ENCODE measurements at regions of chr7 and their contacts with region 1.

Region 1: GRCh38 chr7:134632937-134633540 is 13.6 kb upstream of the BPGM start:
- DNase-seq: peak; percentile 52
- H3K4me3 Mint-ChIP-seq: no peak overlapping the region
- H3K27ac Mint-ChIP-seq: no peak overlapping the region
- H3K4me1 Mint-ChIP-seq: peaks cover 27% of the 10 kb centered on the region
- H3K27me3 Mint-ChIP-seq: peaks cover 5% of the 10 kb centered on the region

Region 2: DNA sequence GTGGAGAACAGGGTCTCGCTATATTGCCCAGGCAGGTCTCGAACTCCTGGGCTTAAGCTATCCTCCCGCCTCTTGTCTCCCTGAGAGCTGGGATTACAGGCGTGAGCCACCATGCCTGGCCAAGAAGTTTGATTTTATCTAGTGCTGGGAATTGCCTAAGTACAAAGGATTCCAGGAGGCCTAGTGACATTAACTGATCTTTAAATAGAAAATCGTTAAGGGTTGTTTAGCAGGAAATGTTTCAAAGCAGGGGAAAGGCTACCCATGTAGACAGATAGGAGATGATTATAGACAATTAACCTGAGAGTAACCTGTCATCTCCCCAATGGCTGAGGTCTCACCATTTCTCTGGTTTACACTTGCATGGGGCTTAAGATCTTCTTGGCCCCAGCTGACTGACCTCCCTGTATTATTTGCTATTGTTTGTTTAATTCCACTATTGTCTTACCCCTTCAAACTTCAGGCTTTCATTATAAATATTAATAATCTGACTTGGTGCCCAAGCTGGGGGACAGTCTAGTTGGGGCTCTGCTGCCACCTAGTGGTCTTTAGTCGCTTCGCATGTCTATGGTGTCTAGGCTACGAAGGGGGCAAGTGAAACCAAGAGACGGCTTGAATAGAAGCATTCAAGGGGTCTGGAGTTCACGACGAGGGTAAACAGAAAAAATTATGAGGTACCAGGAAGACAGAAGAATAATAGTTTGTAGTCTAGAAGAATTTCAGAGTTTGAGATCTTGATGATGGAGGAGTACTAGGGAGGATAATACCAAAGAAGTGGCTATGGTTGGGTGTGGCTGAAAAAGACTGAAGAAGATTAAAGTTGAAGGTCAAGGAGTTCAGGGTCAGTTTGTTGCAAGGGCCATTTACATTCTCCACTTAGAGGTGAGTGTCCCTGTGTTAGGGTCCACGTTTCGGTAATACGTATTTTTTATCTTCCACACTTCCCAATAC is 26.8 kb before region 1 on chr7:
- CTCF ChIA-PET with region 1: interaction called, 16 read pairs
- intact Hi-C with region 1: no loop called
- DNase-seq: peak; percentile 76
- H3K4me3 Mint-ChIP-seq: no peak overlapping the region
- H3K27ac Mint-ChIP-seq: no peak overlapping the region
- H3K4me1 Mint-ChIP-seq: peaks cover 1% of the 10 kb centered on the region
- H3K27me3 Mint-ChIP-seq: peaks cover 3% of the 10 kb centered on the region

Region 3: DNA sequence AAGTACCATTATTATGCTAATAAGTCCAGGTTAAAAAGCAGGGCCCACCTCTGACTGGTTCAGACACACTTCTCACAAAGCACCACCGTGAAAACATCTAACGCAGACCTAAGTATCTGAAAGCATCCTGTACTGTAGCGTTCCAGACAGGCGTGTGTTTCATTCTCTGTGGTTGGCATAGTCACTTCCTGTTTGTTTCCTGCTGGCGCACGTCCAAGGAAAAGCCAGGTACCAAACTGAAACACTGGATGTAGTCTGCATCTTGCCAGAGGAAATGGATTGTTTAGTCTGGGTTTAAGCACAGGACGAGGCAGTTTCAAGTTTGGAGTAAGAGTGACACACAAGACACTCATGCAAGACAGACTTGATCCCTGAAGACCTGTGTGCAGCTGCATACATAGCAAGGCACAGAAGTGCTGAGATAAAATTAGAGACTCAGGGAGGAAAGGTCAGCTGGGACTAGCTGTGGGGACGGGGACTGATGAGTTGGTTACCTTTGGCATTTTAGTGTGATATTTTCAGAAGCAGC is 36.9 kb after region 1 on chr7:
- CTCF ChIA-PET with region 1: interaction called, 11 read pairs
- intact Hi-C with region 1: loop called (anchors 1 kb)
- DNase-seq: peak; percentile 88
- H3K4me3 Mint-ChIP-seq: peak overlapping the region; percentile 65
- H3K27ac Mint-ChIP-seq: peak overlapping the region; percentile 85
- H3K4me1 Mint-ChIP-seq: peaks cover 52% of the 10 kb centered on the region
- H3K27me3 Mint-ChIP-seq: no peaks in the 10 kb centered on the region

Region 4: GRCh38 chr7:134701272-134701671 is 68.2 kb after region 1 on chr7:
- CTCF ChIA-PET with region 1: interaction called, 88 read pairs
- intact Hi-C with region 1: loop called (anchors 1 kb)
- DNase-seq: no peak
- H3K4me3 Mint-ChIP-seq: no peak overlapping the region
- H3K27ac Mint-ChIP-seq: no peak overlapping the region
- H3K4me1 Mint-ChIP-seq: no peaks in the 10 kb centered on the region
- H3K27me3 Mint-ChIP-seq: no peaks in the 10 kb centered on the region

Region 5: DNA sequence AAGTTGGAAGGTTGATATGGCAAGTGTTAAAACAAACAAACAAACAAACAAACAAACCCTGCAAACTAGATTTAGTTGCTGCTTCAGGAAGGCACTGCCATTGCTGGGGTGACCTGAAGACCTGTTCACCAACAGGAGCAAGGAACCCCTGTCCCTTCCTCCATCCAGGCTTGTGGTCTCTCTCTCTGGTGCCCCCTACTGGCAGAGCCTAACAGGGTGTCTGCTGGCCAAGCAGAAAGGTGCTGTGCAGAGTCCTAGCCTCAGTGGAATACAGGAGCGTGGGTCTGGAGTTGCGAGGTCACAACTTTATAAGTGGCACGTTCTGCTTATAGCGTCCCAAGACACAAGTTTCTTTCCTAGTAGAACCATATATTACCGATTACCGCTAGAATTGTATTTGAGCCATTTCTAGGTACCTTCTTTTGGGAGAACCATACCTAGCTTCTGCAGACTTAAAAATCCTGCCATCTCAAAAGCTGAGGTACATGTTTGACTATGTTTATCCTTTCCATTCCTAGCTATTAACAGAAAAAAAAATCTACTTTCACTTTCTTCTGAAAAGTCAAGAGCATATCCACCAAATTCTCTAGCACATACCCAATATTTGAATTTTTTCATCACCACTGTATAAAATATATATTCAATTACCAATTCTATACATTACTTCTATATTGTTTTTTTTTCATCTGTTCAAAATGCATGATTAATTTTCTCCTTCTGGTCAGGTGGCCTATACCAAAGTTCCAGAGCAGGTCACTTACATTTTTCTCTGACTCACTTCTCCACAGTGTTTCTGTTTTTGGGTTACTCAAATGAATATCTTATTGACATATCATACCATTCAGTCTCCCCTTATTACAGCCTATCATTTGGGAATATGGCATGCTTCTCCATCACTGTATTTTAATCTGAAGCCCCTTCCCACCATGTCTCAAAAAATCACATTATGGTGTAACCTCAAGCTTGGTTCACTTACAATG is 117.3 kb after region 1 on chr7:
- CTCF ChIA-PET with region 1: interaction called, 49 read pairs
- intact Hi-C with region 1: loop called (anchors 1 kb)
- DNase-seq: peak; percentile 86
- H3K4me3 Mint-ChIP-seq: no peak overlapping the region
- H3K27ac Mint-ChIP-seq: no peak overlapping the region
- H3K4me1 Mint-ChIP-seq: peaks cover 3% of the 10 kb centered on the region
- H3K27me3 Mint-ChIP-seq: no peaks in the 10 kb centered on the region

Region 6: GRCh38 chr7:134845468-134845867 is 212.4 kb after region 1 on chr7:
- CTCF ChIA-PET with region 1: interaction called, 3 read pairs
- intact Hi-C with region 1: loop called (anchors 2 kb)
- DNase-seq: peak; percentile 37
- H3K4me3 Mint-ChIP-seq: no peak overlapping the region
- H3K27ac Mint-ChIP-seq: peak overlapping the region; percentile 65
- H3K4me1 Mint-ChIP-seq: peaks cover 24% of the 10 kb centered on the region
- H3K27me3 Mint-ChIP-seq: no peaks in the 10 kb centered on the region

Region 7: GRCh38 chr7:134954197-134955082 is 321.4 kb after region 1 on chr7:
- CTCF ChIA-PET with region 1: interaction called, 15 read pairs
- intact Hi-C with region 1: loop called (anchors 1 kb)
- DNase-seq: no peak
- H3K4me3 Mint-ChIP-seq: no peak overlapping the region
- H3K27ac Mint-ChIP-seq: no peak overlapping the region
- H3K4me1 Mint-ChIP-seq: no peaks in the 10 kb centered on the region
- H3K27me3 Mint-ChIP-seq: no peaks in the 10 kb centered on the region